ENCODE measurements at regions of chr1 and their contacts with region 1.

Region 1: GRCh38 chr1:244796718-244797406 is 38.6 kb upstream of the COX20 start:
- DNase-seq: peak; percentile 89
- H3K4me3 Mint-ChIP-seq: no peak overlapping the region
- H3K27ac Mint-ChIP-seq: no peak overlapping the region
- H3K4me1 Mint-ChIP-seq: peaks cover 5% of the 10 kb centered on the region
- H3K27me3 Mint-ChIP-seq: no peaks in the 10 kb centered on the region
- CTCF ChIP-seq: peak; percentile 92

Region 2: DNA sequence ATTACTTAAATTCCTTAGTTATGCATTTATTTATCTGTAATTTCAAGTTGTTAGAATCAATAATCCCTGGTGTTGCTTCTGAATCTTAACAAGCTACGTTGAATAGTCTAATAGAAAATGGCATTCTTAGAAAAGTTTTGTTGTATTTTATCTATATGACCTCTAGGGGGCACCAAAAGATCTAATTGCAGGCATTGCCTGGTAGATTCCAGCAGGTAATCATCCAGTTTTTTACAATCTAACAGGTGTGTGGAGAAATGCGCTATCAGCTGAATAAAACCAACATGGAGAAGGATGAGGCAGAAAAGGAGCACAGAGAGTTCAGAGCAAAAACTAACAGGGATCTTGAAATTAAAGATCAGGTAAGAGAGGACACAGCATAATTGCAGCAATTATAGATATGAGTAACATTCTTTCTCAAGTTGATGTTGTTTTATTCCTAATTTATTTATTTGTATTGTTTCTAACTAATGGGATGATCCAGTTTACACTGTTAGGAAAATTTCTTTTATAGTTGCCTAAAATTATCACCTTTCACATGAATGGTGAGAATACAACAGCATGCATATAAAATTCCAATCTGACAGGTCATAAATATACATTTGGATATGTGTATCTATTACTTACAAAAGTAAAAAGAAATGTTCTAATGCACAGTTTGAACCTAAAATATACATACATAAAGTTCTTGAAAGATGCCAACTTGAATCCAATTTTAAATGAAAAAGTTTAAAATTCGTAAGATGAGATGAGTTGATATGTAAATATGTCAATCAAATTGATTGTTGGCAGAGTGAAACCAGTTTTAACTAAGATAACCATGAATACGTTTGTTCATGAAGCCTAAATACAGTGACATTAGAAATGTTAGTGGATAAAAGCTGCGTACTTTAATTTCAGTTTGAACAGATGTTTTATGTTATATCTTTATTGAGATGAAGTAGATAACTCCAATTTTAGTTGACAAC is 1452.6 kb before region 1 on chr1:
- CTCF ChIA-PET with region 1: no interaction called
- POLR2A ChIA-PET with region 1: no interaction called
- intact Hi-C with region 1: loop called (anchors 2 kb)
- DNase-seq: peak; percentile 79
- H3K4me3 Mint-ChIP-seq: no peak overlapping the region
- H3K27ac Mint-ChIP-seq: no peak overlapping the region
- H3K4me1 Mint-ChIP-seq: peaks cover 5% of the 10 kb centered on the region
- H3K27me3 Mint-ChIP-seq: no peaks in the 10 kb centered on the region
- CTCF ChIP-seq: peak; percentile 91

Region 3: DNA sequence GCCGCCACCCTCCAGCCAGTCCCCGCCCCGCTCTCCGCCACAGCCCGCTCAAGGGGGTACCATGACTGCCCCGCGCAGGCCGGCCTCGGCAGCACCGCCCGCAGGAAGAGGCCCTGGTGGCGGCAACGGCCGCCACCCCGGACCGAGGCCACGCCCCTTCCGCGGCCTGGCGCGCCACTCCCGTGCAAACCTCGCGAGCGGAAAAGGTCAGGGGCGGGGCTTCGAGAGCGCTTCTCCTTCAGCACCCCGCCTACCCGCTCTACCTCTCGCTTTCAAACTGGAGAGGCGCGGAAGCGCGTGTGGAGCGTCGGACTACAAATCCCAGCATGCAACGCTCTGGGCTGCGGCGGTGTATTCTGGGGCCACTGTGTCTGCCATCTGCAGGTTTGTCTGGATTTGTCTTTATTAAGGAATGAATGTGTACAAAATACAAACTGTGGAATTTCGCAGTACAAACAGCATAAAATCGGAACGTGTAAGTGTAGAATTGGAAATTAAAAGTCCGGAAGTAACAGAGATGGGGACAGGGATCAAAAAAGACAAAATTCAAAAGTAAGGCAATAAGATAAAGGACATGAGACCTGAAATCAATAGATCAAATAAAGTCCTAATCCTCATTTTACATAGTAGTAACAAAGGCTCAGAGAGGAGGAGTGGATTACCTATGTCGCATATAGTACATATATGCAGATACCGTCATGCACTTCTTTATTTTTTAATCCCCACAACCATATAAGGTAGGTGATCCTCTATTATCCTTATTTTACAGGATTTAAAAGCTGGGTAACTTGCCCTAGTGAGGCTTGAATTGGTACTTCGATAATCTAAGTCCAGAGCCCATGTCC is 344.7 kb before region 1 on chr1:
- CTCF ChIA-PET with region 1: interaction called, 13 read pairs
- POLR2A ChIA-PET with region 1: no interaction called
- intact Hi-C with region 1: loop called (anchors 2 kb)
- DNase-seq: peak; percentile 100
- H3K4me3 Mint-ChIP-seq: peak overlapping the region; percentile 70
- H3K27ac Mint-ChIP-seq: peak overlapping the region; percentile 66
- H3K4me1 Mint-ChIP-seq: peaks cover 39% of the 10 kb centered on the region
- H3K27me3 Mint-ChIP-seq: no peaks in the 10 kb centered on the region
- CTCF ChIP-seq: peak; percentile 45

Region 4: DNA sequence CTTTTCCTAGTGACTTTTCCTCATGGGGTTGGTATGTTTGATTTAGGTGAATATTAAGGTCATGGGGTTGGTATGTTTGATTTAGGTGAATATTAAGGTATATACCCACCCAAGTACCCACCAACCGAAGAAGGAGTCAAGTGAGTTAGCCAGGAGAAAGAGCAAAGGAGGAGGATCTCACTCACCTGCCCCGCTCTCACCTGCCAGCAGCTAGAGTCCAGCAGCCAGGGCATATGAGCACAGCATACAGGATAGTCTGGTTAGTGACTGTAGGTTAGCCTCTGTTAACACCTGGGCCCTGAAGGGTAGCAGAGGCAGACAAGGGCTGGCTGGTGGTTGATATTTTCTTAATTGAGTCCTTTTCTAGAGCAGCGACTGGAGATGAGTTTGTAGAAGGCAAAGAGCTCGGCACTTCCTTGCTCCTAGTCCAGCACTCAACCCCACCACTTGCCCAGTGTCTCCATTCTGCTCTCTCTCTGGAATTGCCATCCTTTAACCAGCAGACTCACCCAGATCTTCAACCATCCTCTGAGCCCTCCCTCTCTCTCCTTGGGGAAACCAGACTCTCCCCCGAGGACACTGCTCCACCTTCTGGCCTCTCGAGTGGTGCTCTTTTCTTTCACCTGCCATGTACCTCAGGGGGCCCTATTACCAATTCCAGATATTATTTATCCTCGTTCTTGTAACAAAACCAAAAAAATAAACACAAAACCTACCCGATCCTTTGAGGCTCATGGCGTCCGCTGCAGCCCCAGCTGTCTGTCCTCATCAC is 160.2 kb before region 1 on chr1:
- CTCF ChIA-PET with region 1: interaction called, 10 read pairs
- POLR2A ChIA-PET with region 1: no interaction called
- intact Hi-C with region 1: no loop called
- DNase-seq: no peak
- H3K4me3 Mint-ChIP-seq: no peak overlapping the region
- H3K27ac Mint-ChIP-seq: no peak overlapping the region
- H3K4me1 Mint-ChIP-seq: no peaks in the 10 kb centered on the region
- H3K27me3 Mint-ChIP-seq: peaks cover 2% of the 10 kb centered on the region
- CTCF ChIP-seq: no peak

Region 5: GRCh38 chr1:244705261-244706234 is 91.3 kb before region 1 on chr1:
- CTCF ChIA-PET with region 1: interaction called, 16 read pairs
- POLR2A ChIA-PET with region 1: no interaction called
- intact Hi-C with region 1: no loop called
- DNase-seq: no peak
- H3K4me3 Mint-ChIP-seq: no peak overlapping the region
- H3K27ac Mint-ChIP-seq: no peak overlapping the region
- H3K4me1 Mint-ChIP-seq: no peaks in the 10 kb centered on the region
- H3K27me3 Mint-ChIP-seq: no peaks in the 10 kb centered on the region
- CTCF ChIP-seq: no peak

Region 6: GRCh38 chr1:244815600-244816099 is 18.8 kb after region 1 on chr1:
- CTCF ChIA-PET with region 1: interaction called, 40 read pairs
- POLR2A ChIA-PET with region 1: interaction called, 6 read pairs
- intact Hi-C with region 1: no loop called
- DNase-seq: no peak
- H3K4me3 Mint-ChIP-seq: no peak overlapping the region
- H3K27ac Mint-ChIP-seq: no peak overlapping the region
- H3K4me1 Mint-ChIP-seq: no peaks in the 10 kb centered on the region
- H3K27me3 Mint-ChIP-seq: no peaks in the 10 kb centered on the region
- CTCF ChIP-seq: no peak

Region 7: DNA sequence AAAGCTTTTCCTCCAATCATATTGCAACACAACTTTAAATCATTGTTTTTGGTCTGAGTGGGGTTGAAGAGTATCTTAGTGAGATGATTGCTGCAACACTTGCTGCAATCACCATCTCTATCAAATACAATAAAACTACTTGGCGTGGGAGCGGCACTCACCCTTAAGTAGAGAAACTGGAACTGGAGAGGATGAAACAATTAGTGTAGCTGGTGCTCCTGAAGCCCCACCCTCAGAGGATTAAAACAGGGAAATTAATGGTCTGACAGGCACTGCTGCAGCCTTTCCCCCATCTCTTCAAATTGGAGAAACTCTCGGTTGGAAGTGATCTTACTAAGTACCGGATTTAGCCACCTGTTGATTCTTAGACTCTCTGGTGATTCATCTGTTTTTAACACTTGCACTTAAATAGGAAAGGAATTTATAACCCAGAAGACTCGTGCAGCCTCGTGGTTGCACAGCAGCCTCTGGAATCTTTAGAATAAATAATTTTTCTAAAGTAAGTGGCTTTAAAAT is 277.4 kb after region 1 on chr1:
- CTCF ChIA-PET with region 1: no interaction called
- POLR2A ChIA-PET with region 1: no interaction called
- intact Hi-C with region 1: no loop called
- DNase-seq: peak; percentile 49
- H3K4me3 Mint-ChIP-seq: no peak overlapping the region
- H3K27ac Mint-ChIP-seq: no peak overlapping the region
- H3K4me1 Mint-ChIP-seq: peaks cover 10% of the 10 kb centered on the region
- H3K27me3 Mint-ChIP-seq: no peaks in the 10 kb centered on the region
- CTCF ChIP-seq: no peak